ENCODE measurements at regions of chrX and their contacts with region 1.

Region 1: DNA sequence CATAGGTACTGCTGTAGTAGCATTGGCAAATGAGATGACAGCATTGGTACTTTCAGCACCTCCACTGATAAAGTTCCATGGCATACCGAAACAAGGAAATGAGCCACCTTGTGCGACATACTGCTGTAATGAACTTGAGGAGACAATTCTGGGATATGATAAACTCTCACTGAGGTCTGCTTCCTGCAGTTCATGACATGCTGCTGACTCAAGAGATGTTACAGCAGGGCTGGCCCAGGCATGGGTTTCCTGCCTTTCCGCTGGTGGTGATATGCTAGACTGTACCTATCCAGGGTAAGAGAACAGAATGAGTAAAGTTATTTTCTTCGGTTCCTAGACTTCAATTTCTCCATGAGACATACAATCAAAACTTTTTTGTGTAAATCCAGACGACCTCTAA is 17.1 kb downstream of the BEND2 start:
- DNase-seq: no peak
- ATAC-seq: no peak
- H3K4me3 ChIP-seq: no peak overlapping the region
- H3K27ac ChIP-seq: no peak overlapping the region
- H3K4me1 ChIP-seq: no peaks in the 10 kb centered on the region
- H3K27me3 ChIP-seq: no peaks in the 10 kb centered on the region
- CTCF ChIP-seq: no peak
- POLR2A ChIP-seq: no peak
- RAD21 ChIP-seq: no peak

Region 2: DNA sequence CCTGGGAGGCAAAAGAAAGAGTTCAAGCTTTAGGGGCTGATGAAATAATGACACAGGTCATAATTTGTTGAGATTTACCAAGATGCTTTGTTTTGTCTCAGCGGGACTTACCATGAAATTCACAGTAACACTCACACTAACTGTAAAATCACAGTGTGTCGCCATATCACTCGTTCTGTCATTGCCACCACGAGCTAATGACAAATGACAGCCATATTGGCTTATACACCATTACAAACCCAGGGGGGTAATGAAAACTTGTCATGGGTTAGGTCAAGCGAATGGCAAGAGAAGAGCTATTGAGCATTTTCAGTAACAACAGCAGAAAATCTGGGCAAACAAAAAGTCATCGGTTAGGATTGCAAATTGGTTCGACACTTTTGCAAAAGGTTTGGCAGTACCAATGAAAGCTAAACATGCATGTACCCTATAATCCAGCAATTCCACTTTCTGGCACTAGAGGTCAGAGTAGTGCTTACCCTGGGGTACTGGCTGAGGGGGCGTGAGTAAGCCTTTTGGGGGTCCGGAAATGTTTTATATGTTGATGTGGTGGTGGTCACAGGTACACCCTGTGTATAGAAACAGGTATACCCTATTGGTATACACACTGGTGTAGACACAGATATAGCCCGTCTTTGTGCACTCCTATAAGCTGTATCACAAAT is 258.7 kb before region 1 on chrX:
- CTCF ChIA-PET with region 1: no interaction called
- POLR2A ChIA-PET with region 1: no interaction called
- RAD21 ChIA-PET with region 1: no interaction called
- intact Hi-C with region 1: loop called (anchors 10 kb)
- DNase-seq: no peak
- ATAC-seq: peak; percentile 69
- H3K4me3 ChIP-seq: no peak overlapping the region
- H3K27ac ChIP-seq: no peak overlapping the region
- H3K4me1 ChIP-seq: no peaks in the 10 kb centered on the region
- H3K27me3 ChIP-seq: no peaks in the 10 kb centered on the region
- CTCF ChIP-seq: peak; percentile 12 to 56 (median 54); a peak in 5 of 6 replicates
- POLR2A ChIP-seq: no peak
- RAD21 ChIP-seq: peak; percentile 40

Measured in HCT116 (cell line).